ENCODE measurements at regions of chr13 and their contacts with region 1.

Region 1: GRCh38 chr13:30802953-30803478 is 67.7 kb downstream of the ALOX5AP start:
- DNase-seq: peak; percentile 90
- H3K4me3 ChIP-seq: no peak overlapping the region
- H3K27ac ChIP-seq: no peak overlapping the region
- H3K4me1 ChIP-seq: peaks cover 24% of the 10 kb centered on the region
- H3K27me3 ChIP-seq: no peaks in the 10 kb centered on the region
- CTCF ChIP-seq: peak; percentile 98

Region 2: DNA sequence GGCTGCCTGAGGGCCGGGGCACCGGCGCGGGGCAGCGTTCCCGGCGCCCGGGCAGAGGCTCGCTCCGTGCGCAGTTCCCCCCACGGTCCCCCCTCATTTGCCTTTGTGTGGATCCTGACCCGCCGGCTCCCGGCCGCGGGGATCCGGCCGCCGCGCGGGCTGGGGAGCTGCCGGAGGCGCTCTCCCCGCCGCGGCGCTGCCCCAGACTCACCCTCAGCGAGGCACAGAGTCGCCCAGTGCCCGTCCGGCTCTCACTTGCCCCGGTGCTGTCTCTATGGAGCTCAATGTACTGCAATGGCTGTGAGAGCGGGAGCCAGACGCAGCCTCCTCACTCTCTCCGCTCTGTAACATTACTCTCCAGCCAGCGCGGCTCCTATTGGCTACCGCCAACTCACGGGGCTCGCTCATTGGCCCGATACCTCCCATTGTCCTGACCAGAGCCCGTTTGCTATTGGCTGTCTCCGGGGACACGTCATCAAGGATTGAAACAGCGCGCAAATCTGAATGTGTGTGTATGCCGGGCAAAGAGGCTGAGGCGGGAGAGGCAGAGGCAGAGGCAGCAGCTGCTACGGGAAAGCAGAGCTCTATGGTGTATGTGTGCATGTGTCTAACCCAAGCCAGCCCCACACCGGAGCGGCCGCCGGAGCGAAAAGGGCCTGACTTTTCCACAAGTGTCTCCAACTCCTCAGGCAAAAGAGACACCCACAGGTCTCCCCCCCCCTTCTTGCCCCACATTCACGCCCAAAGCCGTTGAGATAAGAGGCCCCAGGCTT is 337.2 kb before region 1 on chr13 and contains the start of gene HMGB1:
- CTCF ChIA-PET with region 1: no interaction called
- POLR2A ChIA-PET with region 1: no interaction called
- intact Hi-C with region 1: loop called (anchors 5 kb)
- DNase-seq: peak; percentile 100
- H3K4me3 ChIP-seq: peak within 1 kb of the TSS; percentile 82
- H3K27ac ChIP-seq: peak within 1 kb of the TSS; percentile 100
- H3K4me1 ChIP-seq: peaks cover 32% of the 10 kb centered on the region
- H3K27me3 ChIP-seq: no peaks in the 10 kb centered on the region
- CTCF ChIP-seq: no peak
- total RNA-seq, gene HMGB1: 1,533 and 1,602 TPM in 2 replicates

Region 3: GRCh38 chr13:30679483-30680330 is 123.3 kb before region 1 on chr13:
- CTCF ChIA-PET with region 1: interaction called, 3 read pairs
- POLR2A ChIA-PET with region 1: no interaction called
- intact Hi-C with region 1: loop called (anchors 2 kb)
- DNase-seq: peak; percentile 56
- H3K4me3 ChIP-seq: no peak overlapping the region
- H3K27ac ChIP-seq: no peak overlapping the region
- H3K4me1 ChIP-seq: no peaks in the 10 kb centered on the region
- H3K27me3 ChIP-seq: no peaks in the 10 kb centered on the region
- CTCF ChIP-seq: peak; percentile 61

Region 4: DNA sequence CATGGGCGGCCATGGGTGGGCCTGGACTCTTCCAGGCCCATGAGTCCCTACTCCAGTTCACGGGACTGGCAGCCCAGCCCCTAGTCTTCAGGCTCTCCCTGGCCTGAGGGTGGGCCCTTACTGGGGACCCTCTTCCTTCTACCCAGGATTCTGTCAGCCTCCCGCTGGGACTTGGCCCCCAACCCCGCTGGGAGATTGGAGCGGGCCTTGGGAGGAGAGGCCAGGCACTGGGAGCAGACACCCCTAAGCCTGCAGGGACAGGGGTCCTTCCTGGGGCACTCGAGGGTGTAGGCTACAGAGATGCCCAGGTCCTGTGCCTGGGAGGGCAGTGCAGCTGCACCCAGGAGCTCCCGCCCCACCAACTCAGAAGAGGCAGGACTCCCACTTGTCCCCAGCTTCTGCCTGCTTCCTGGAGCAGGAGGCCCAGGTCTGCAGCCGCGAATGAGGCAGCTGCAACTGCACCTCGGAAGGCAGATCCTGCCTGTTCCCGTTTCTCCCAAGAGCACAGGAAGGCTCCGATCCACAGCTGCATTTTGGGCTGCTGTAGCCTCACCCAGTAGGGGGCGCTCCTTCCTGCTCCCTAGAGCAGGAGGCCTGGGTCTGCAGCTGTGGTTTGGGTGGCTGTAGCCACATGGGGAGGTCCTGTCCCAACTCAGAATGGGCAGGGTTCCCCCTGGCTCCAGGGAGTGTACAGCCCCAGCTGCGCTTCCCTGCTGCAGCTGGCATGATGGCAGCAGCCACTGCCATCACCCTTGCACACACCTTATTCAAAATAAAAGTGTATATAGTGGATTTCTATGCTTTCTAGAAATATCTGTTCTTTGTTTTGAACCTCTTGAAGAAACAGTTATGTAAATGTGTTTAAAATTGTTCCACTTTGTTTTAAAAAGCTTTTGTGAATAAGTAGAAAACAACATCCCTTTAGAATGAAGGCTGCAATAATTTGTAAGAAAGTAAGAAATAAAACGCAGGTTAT is 176.3 kb after region 1 on chr13:
- CTCF ChIA-PET with region 1: no interaction called
- POLR2A ChIA-PET with region 1: no interaction called
- intact Hi-C with region 1: no loop called
- DNase-seq: peak; percentile 78
- H3K4me3 ChIP-seq: no peak overlapping the region
- H3K27ac ChIP-seq: no peak overlapping the region
- H3K4me1 ChIP-seq: no peaks in the 10 kb centered on the region
- H3K27me3 ChIP-seq: no peaks in the 10 kb centered on the region
- CTCF ChIP-seq: peak; percentile 96

Measured in A673 (cell line).